Activated CD4-positive, alpha-beta memory T cell treated with anti-CD3 and anti-CD28 coated beads for 36 hours (primary cell): ENCODE measurements at regions of chr4 and their contacts with region 1.

Region 1: DNA sequence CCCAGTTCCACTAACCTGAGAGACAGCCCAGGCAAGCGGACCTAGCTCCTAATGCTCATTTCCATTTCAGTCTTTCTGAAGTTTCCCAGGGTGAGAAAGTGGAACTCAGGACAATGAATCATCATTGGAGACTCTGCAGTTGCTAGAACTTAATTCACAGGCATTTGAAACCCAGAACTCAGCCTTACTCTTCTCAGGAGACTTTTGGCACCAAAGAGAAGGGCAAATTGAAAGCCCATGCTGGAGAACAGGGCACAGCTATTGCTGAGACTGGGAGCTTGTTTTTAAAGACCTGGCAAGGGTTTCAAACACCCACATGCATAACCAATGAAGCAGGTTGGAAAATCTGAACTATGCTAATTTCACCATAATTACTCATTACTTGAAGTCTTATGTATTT is 36.0 kb downstream of the BST1 start:
- DNase-seq: peak; percentile 19
- H3K4me3 Mint-ChIP-seq: no peak overlapping the region
- H3K27ac Mint-ChIP-seq: peak overlapping the region; percentile 24
- H3K4me1 Mint-ChIP-seq: peaks cover 31% of the 10 kb centered on the region
- H3K27me3 Mint-ChIP-seq: no peaks in the 10 kb centered on the region

Region 2: GRCh38 chr4:15771216-15772058 is 32.6 kb after region 1 on chr4:
- CTCF ChIA-PET with region 1: interaction called, 10 read pairs
- POLR2A ChIA-PET with region 1: interaction called, 4 read pairs
- intact Hi-C with region 1: loop called (anchors 1 kb)
- DNase-seq: peak; percentile 50
- H3K4me3 Mint-ChIP-seq: no peak overlapping the region
- H3K27ac Mint-ChIP-seq: peak overlapping the region; percentile 29
- H3K4me1 Mint-ChIP-seq: peaks cover 48% of the 10 kb centered on the region
- H3K27me3 Mint-ChIP-seq: peaks cover 27% of the 10 kb centered on the region

Region 3: DNA sequence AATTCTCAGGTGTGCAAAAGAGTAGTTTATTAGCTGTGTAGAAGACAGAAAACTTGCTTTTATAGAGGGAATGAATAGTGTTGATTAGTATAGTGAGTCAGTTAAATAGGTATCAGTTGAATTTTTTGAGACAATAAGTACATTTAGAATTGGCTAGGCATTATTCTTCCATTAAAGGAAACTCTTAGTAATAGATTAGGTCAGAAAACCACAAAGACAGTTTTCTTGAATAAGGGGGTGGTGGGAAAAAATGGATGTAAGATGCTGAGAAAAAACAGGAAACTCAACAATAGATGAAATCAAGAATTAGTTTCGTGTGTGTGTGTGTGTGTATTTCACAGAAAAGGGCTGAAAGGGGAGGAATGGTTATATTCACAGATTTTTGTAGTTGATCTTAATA is 56.0 kb after region 1 on chr4:
- CTCF ChIA-PET with region 1: no interaction called
- POLR2A ChIA-PET with region 1: interaction called, 3 read pairs
- intact Hi-C with region 1: loop called (anchors 1 kb)
- DNase-seq: no peak
- H3K4me3 Mint-ChIP-seq: no peak overlapping the region
- H3K27ac Mint-ChIP-seq: peak overlapping the region; percentile 10
- H3K4me1 Mint-ChIP-seq: peaks cover 29% of the 10 kb centered on the region
- H3K27me3 Mint-ChIP-seq: peaks cover 4% of the 10 kb centered on the region